AG04449 (cell line): ENCODE measurements at regions of chr19 and their contacts with region 1.

Region 1: GRCh38 chr19:27966390-27966816 is 1246.5 kb downstream of the UQCRFS1 start:
- DNase-seq: no peak
- H3K4me3 ChIP-seq: no peak overlapping the region
- CTCF ChIP-seq: peak; percentile 27

Region 2: GRCh38 chr19:27660428-27660827 is 306.0 kb before region 1 on chr19:
- CTCF ChIA-PET with region 1: no interaction called
- POLR2A ChIA-PET with region 1: no interaction called
- DNase-seq: no peak
- H3K4me3 ChIP-seq: no peak overlapping the region
- CTCF ChIP-seq: no peak

Region 3: DNA sequence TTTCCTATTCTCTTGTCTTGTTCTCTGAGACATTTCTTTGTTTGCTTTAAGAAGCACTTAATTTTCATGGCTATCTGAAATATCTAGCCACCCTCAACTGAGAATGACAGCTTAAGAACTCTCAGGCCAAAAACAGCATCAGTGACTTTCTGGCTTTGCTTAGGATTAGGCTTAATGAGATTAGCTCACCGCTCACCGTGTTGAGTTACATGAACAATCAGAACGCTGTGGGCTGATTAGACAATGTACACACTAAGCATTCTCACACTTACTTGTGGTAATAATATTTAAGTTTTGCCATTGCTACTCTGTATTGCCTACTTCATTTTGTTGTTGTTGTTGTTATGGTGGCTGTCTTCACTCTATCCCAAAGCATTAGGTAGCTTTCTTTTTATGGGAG is 37.0 kb before region 1 on chr19:
- CTCF ChIA-PET with region 1: no interaction called
- POLR2A ChIA-PET with region 1: no interaction called
- DNase-seq: no peak
- H3K4me3 ChIP-seq: no peak overlapping the region
- CTCF ChIP-seq: no peak

Region 4: DNA sequence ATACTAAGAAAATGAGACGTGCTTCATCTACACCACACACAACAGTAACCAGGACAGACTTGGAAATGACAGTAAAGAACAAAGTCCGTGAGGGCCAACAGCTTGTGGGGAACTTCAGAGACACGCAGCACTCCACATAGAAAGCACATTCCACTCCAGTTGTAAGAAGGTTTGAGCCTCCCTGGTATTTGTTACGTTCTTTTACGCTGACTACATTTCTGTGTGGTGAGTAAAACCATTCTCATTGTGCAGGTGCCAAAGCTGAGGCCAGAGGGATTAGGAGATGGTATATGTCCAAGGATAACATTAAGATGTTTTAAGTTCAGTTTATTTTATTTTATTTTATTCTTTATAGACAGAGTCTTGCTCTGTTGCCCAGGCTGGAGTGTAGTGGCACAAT is 56.7 kb after region 1 on chr19:
- CTCF ChIA-PET with region 1: no interaction called
- POLR2A ChIA-PET with region 1: no interaction called
- DNase-seq: no peak
- H3K4me3 ChIP-seq: no peak overlapping the region
- CTCF ChIP-seq: no peak

Region 5: GRCh38 chr19:28710278-28710677 is 743.9 kb after region 1 on chr19:
- CTCF ChIA-PET with region 1: interaction called, 15 read pairs
- POLR2A ChIA-PET with region 1: no interaction called
- DNase-seq: peak; percentile 19
- H3K4me3 ChIP-seq: no peak overlapping the region
- CTCF ChIP-seq: peak; percentile 47